ENCODE measurements at regions of chr20 and their contacts with region 1.

Region 1: DNA sequence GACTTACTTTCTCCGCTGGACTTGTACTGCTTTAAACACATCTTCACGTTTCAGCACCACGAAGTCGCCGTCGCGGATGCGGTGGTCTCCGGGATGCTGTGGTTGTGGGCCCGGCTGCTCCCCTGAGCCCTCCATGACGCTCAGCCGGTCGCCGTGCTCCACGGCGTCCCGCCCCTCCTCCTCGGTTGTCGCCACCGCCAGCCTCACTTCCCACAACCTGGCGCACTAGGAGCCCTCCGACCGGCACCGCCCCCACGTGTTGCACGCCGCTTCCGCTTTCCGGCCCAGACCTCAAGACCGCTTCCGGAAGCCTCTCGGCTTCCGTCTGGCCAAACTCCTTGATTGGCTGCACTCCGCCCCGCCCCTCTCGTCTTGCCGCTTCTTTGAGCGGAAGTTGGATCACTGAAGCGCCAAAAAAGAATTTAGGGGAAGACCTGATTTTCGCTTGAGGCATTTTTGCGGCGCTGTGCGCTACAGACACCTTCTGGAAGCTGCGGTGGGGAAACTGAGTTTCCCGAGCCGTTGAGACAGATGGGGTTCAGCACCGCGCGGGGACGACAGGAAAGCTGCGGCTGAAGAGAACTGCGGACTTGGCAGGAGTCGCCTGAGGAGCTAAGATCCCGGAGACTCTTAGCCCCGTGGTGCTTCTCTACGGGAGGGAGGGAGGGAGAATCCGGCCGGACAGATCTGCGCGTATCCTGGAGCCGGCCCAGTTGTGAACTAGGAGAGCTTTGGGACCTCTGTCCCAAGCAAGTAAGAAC is at the starts of genes MCM8 and TRMT6:
- DNase-seq: peak; percentile 89 to 98 (median 94)
- ATAC-seq: peak; percentile 97
- H3K4me3 ChIP-seq: peak within 1 kb of the TSS; percentile 86
- H3K4me3 Mint-ChIP-seq: peak within 1 kb of the TSS; percentile 94
- H3K27ac ChIP-seq: peak within 1 kb of the TSS; percentile 55 to 61
- H3K27ac Mint-ChIP-seq: peak within 1 kb of the TSS; percentile 81
- H3K4me1 ChIP-seq: peaks cover 25% of the 10 kb centered on the region
- H3K4me1 Mint-ChIP-seq: peaks cover 38% of the 10 kb centered on the region
- H3K27me3 ChIP-seq: no peaks in the 10 kb centered on the region
- H3K27me3 Mint-ChIP-seq: no peaks in the 10 kb centered on the region
- CTCF ChIP-seq: no peak
- total RNA-seq, gene MCM8: 1.4 to 1.7 TPM
- total RNA-seq, gene TRMT6: 8.1 TPM

Region 2: DNA sequence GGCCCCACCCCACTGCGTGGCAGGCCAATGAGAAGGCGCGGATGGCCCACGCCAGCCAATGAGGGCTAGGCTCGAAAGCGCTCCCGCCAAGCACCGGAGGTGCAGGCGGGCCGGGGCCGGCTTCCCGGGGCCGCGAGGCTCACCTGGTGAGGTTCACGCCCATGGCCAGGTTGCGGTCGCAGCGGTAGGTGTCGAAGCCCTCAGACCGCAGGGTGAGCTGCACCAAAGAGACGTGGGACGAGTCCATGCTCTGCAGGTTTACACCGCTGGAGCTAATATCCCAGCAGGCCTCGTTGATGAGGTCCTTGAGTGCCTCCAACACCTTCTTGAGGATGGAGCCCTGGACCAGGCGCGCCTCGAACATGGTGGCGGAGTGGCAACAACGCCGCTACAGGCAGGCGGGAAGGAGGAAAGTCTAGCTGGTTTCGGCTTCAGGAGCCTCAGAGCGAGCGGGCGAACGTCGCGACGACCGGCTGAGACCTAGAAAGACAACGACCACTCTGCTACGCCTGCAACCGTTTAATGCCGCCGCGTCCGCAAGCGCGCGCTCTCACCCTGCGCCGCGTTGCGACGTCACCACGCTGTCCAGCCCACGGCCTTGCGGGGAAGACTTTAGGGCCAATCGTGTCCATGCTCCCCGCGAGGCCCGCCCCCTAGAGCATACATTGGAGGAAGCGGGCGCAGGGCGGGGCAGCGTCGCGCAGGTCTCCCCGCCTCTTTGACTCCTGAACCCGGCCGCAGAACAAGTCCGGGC is 830.8 kb before region 1 on chr20 and contains the start of gene PCNA:
- CTCF ChIA-PET with region 1: no interaction called
- POLR2A ChIA-PET with region 1: no interaction called
- intact Hi-C with region 1: loop called in 1 of 2 experiments (anchors 5 kb)
- DNase-seq: peak; percentile 89 to 97 (median 94)
- ATAC-seq: peak; percentile 90
- H3K4me3 ChIP-seq: peak within 1 kb of the TSS; percentile 84
- H3K4me3 Mint-ChIP-seq: peak within 1 kb of the TSS; percentile 98
- H3K27ac ChIP-seq: peak within 1 kb of the TSS; percentile 80 to 90
- H3K27ac Mint-ChIP-seq: peak within 1 kb of the TSS; percentile 95
- H3K4me1 ChIP-seq: peaks cover 20% of the 10 kb centered on the region
- H3K4me1 Mint-ChIP-seq: peaks cover 40% of the 10 kb centered on the region
- H3K27me3 ChIP-seq: no peaks in the 10 kb centered on the region
- H3K27me3 Mint-ChIP-seq: no peaks in the 10 kb centered on the region
- CTCF ChIP-seq: no peak
- total RNA-seq, gene PCNA: 32.6 to 33.0 TPM

Region 3: DNA sequence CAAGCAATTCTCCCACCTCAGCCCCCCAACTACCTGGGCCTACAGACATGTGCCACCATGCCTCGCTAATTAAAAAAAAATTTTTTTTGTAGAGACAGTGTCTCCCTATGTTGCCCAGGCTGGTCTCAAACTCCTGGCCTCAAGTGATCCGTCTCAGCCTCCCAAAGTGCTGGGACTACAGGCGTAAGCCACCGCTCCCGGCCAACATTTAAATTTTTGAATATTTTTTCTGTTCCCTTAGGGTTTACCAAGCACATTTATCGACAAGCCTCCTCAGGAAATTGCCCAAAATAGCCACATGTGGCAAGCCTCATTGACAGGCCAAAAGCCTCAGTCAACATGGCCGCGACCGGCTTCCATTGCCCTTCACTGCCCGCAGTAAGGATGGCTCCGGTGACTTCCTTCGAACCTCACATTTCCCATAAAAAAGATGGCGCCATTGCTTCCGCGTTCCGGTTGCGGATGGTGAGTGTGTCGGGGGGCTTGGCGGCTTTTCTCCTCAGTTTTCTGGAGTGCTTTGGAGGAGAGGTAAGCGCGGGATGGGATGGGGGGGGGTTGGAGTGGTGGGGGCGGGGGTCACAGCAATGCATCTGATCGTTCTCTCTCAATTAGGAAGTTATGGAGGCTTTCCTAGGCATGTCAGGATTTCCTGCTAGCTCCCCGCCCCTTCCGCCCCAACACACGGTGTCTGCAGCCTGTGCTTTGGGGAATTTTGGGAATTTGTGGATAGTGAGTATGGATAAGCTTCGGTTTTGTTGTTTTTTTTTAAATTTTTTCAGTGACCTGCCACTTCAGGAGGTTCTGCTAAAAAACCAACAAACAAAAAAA is 200.3 kb before region 1 on chr20 and contains the start of gene SHLD1:
- CTCF ChIA-PET with region 1: no interaction called
- POLR2A ChIA-PET with region 1: no interaction called
- intact Hi-C with region 1: loop called in 1 of 2 experiments (anchors 2 kb)
- DNase-seq: peak; percentile 67 to 91 (median 76)
- ATAC-seq: peak; percentile 98
- H3K4me3 ChIP-seq: peak within 1 kb of the TSS; percentile 75
- H3K4me3 Mint-ChIP-seq: peak within 1 kb of the TSS; percentile 96
- H3K27ac ChIP-seq: peak within 1 kb of the TSS; percentile 53 to 61
- H3K27ac Mint-ChIP-seq: peak within 1 kb of the TSS; percentile 87
- H3K4me1 ChIP-seq: peaks cover 23% of the 10 kb centered on the region
- H3K4me1 Mint-ChIP-seq: peaks cover 37% of the 10 kb centered on the region
- H3K27me3 ChIP-seq: no peaks in the 10 kb centered on the region
- H3K27me3 Mint-ChIP-seq: no peaks in the 10 kb centered on the region
- CTCF ChIP-seq: no peak
- total RNA-seq, gene SHLD1: 7.0 to 7.3 TPM

Region 4: DNA sequence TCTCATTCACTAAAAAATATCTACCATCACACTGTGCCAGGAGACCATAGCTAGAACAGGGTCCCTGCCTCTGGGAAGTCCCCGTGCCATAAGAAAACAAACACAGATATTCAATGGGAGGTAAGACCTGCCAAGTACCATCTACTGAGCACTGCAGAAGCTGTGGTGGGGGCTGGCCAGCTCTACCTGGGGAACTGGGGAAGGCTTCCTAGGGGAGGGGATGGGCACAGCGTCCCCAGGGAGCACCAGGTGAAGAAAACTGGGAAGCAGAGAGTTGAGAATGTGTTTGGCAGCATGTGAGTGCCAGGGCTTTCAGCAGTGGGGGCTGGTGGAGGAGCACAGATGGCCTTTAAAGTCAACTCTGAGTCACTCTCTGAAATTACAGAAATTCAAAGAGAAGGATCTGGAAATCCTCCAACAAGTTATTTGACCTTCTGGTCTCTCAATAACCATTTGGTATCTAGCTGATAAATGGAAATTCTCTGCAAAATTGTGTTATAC is 115.1 kb before region 1 on chr20:
- CTCF ChIA-PET with region 1: no interaction called
- POLR2A ChIA-PET with region 1: no interaction called
- intact Hi-C with region 1: loop called (anchors 5 kb)
- DNase-seq: peak in 11 of 14 experiments; percentile 14 to 69 (median 32)
- ATAC-seq: peak; percentile 58
- H3K4me3 ChIP-seq: no peak overlapping the region
- H3K4me3 Mint-ChIP-seq: peak overlapping the region; percentile 88
- H3K27ac ChIP-seq: peak overlapping the region; percentile 76 to 88
- H3K27ac Mint-ChIP-seq: peak overlapping the region; percentile 96
- H3K4me1 ChIP-seq: peaks cover 24% of the 10 kb centered on the region
- H3K4me1 Mint-ChIP-seq: peaks cover 52% of the 10 kb centered on the region
- H3K27me3 ChIP-seq: no peaks in the 10 kb centered on the region
- H3K27me3 Mint-ChIP-seq: no peaks in the 10 kb centered on the region
- CTCF ChIP-seq: no peak

Region 5: GRCh38 chr20:5933802-5934436 is 16.5 kb before region 1 on chr20:
- CTCF ChIA-PET with region 1: no interaction called
- POLR2A ChIA-PET with region 1: no interaction called
- intact Hi-C with region 1: no loop called
- DNase-seq: peak in 4 of 14 experiments; percentile 14 to 28 (median 18)
- ATAC-seq: peak; percentile 48
- H3K4me3 ChIP-seq: no peak overlapping the region
- H3K4me3 Mint-ChIP-seq: no peak overlapping the region
- H3K27ac ChIP-seq: no peak overlapping the region
- H3K27ac Mint-ChIP-seq: no peak overlapping the region
- H3K4me1 ChIP-seq: no peaks in the 10 kb centered on the region
- H3K4me1 Mint-ChIP-seq: no peaks in the 10 kb centered on the region
- H3K27me3 ChIP-seq: no peaks in the 10 kb centered on the region
- H3K27me3 Mint-ChIP-seq: no peaks in the 10 kb centered on the region
- CTCF ChIP-seq: no peak

Measured in CD4-positive, alpha-beta T cell (primary cell).